ENCODE measurements at regions of chr9 and their contacts with region 1.

Region 1: DNA sequence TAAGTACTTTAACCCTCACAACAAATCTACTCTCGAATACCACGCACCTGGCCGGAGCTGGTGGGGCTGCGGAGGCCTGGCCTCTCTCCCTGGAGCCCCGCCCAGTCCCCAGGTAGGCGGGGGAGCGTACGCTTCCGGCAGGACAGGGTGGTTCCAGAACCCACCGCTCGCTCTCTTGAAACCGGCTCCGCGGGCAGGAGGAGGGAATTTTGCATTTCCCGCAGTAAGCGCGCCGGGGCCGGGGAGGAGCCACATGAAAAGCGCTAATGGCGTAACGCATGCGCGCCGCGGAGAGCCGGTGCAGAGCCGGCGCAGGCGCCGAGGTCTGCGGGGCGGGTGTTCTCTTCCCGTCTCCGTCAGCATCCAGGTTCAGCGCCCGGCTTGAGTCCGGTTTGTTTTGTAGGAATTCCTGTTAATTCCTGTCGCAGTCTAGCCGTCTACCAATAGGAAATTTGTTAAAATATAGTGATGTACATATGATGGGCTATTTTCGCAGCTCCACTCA is 20.8 kb downstream of the CAVIN4 start:
- DNase-seq: peak; percentile 83
- H3K4me3 Mint-ChIP-seq: peak overlapping the region; percentile 72
- H3K27ac Mint-ChIP-seq: peak overlapping the region; percentile 58
- H3K4me1 Mint-ChIP-seq: peaks cover 15% of the 10 kb centered on the region
- H3K27me3 Mint-ChIP-seq: no peaks in the 10 kb centered on the region

Region 2: GRCh38 chr9:99221621-99222415 is 1376.9 kb before region 1 on chr9 and contains the starts of genes ALG2 and SEC61B:
- CTCF ChIA-PET with region 1: no interaction called
- intact Hi-C with region 1: loop called (anchors 5 kb)
- DNase-seq: peak; percentile 94
- H3K4me3 Mint-ChIP-seq: peak within 1 kb of the TSS; percentile 97
- H3K27ac Mint-ChIP-seq: peak within 1 kb of the TSS; percentile 98
- H3K4me1 Mint-ChIP-seq: peaks cover 56% of the 10 kb centered on the region
- H3K27me3 Mint-ChIP-seq: no peaks in the 10 kb centered on the region
- total RNA-seq, gene ALG2: 11.3 to 11.8 TPM
- total RNA-seq, gene SEC61B: 105 TPM

Region 3: GRCh38 chr9:100098887-100099721 is 499.6 kb before region 1 on chr9 and contains the starts of genes ERP44 and INVS:
- CTCF ChIA-PET with region 1: no interaction called
- intact Hi-C with region 1: loop called (anchors 1 kb)
- DNase-seq: peak; percentile 99
- H3K4me3 Mint-ChIP-seq: peak within 1 kb of the TSS; percentile 97
- H3K27ac Mint-ChIP-seq: peak within 1 kb of the TSS; percentile 79
- H3K4me1 Mint-ChIP-seq: peaks cover 29% of the 10 kb centered on the region
- H3K27me3 Mint-ChIP-seq: no peaks in the 10 kb centered on the region
- total RNA-seq, gene ERP44: 9.1 to 9.5 TPM
- total RNA-seq, gene INVS: 5.7 to 7.3 TPM

Region 4: GRCh38 chr9:100277166-100277979 is 321.3 kb before region 1 on chr9:
- CTCF ChIA-PET with region 1: no interaction called
- intact Hi-C with region 1: no loop called
- DNase-seq: no peak
- H3K4me3 Mint-ChIP-seq: no peak overlapping the region
- H3K27ac Mint-ChIP-seq: no peak overlapping the region
- H3K4me1 Mint-ChIP-seq: no peaks in the 10 kb centered on the region
- H3K27me3 Mint-ChIP-seq: no peaks in the 10 kb centered on the region

Region 5: DNA sequence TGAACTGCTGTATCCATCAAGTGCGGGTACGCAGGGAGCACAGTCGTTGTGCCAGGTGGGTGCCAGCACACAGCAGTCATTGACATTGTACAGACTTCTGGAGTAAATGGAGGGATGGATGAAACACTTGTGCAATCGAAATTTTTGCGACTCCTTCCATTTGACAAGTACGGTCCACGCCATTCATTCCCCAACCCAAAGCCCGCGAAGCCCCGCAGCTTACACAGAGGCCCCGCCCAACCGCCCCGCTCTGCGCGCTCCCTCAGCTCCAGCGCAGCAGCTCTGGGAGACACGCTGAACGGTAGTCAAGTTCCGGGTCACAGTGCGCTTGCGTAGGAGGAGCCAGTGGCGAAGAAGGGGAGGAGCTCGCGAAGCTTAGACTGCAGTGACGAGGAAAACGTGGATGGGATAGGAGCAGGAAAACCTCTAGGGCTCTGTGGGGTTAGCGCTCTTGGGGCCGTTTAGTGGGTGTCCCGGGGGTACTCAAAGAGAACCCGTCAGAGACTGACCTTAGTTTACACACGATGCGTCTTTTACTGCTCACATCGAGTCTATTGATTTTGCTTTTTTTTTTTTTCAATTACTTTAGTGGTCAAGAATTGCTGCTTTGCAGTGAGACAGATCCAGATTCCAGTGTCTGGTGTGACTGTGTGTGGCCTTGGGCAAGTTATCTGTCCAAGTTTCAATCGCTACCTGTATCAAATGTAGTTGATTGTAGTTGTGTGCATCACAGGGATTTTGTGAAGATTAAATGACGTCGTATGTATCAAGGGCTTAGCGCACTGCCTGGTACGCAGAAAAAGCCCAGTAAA is 187.0 kb before region 1 on chr9:
- CTCF ChIA-PET with region 1: interaction called, 5 read pairs
- intact Hi-C with region 1: loop called (anchors 5 kb)
- DNase-seq: peak; percentile 93
- H3K4me3 Mint-ChIP-seq: peak overlapping the region; percentile 82
- H3K27ac Mint-ChIP-seq: peak overlapping the region; percentile 32
- H3K4me1 Mint-ChIP-seq: peaks cover 13% of the 10 kb centered on the region
- H3K27me3 Mint-ChIP-seq: peaks cover 17% of the 10 kb centered on the region

Region 6: DNA sequence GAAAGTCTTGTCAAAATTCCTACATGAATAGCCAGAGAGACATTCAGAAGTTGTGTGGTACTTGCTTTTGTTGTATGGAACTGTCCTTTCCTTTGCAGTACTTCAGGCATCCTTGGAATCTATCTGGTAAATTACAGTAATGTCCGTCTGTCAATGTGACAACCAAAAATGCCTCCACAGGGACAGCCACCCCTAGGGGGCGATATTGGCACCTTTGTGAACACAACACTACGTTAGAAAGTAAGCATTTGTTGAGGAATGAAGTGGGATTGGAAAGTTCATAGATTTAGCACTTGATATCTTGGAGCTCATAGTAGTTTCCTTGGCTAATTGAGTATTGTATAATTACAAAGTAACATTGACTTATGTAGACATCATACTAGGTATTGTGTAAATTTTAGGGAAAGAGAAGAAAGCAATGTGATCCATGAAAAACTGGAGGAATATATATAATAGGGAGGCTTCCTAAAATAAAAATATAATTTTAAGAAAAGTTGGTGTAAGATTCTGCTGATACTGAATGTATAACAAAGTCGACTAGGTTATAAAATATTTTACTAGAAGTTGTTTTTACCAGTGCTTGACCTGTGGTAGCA is 93.0 kb before region 1 on chr9:
- CTCF ChIA-PET with region 1: no interaction called
- intact Hi-C with region 1: loop called (anchors 1 kb)
- DNase-seq: peak; percentile 82
- H3K4me3 Mint-ChIP-seq: no peak overlapping the region
- H3K27ac Mint-ChIP-seq: no peak overlapping the region
- H3K4me1 Mint-ChIP-seq: no peaks in the 10 kb centered on the region
- H3K27me3 Mint-ChIP-seq: peaks cover 2% of the 10 kb centered on the region

Region 7: DNA sequence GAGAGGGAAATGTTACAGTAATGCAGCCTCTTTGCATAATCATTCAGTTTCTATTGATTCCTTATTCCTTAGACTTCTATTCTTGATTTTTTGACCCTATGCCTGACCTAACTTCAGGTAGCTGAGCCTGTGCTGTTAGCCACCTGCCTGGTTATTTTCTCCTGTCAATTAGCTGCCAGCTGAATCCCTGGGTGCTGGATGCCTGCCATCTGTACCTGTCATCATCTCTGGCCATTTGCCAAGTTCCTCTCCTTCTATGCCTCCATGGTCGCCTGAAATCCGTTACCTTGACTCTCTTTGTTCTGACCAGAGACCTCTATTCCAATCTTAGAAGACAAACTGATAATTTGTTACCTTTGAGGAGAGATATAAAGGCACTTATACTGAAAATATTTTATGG is 157.5 kb after region 1 on chr9:
- CTCF ChIA-PET with region 1: no interaction called
- intact Hi-C with region 1: no loop called
- DNase-seq: no peak
- H3K4me3 Mint-ChIP-seq: no peak overlapping the region
- H3K27ac Mint-ChIP-seq: no peak overlapping the region
- H3K4me1 Mint-ChIP-seq: no peaks in the 10 kb centered on the region
- H3K27me3 Mint-ChIP-seq: peaks cover 3% of the 10 kb centered on the region

Region 8: DNA sequence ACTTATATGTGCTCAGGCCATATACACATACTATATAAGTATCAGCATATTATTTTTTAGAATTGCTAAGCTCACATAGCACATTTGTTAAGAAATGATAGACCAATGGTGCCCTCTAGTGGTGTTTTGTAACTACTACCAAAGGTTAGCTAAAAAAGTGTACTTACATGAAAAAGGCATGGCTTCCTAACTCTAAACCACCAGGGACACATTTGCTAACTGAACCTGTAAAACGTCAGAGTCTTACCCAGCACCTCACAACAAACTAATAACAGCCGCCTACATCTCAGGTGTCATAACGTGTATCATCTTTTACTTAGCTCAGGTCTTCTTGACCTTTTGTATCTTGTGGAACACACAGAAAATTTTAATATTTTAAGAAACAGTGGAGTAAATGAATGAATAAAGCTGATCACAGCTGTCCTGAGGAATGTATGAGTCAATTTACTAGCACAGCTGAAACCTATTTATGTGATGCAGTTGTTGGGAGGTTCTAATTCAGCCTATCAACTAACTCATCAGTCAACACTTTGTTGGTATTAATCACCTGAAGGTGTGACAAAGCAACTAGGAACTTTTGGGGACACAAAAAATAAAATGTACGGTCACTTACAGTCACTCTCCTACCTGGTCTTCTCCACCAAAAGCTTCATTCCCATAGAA is 713.2 kb after region 1 on chr9:
- CTCF ChIA-PET with region 1: interaction called, 42 read pairs
- intact Hi-C with region 1: loop called (anchors 1 kb)
- DNase-seq: no peak
- H3K4me3 Mint-ChIP-seq: no peak overlapping the region
- H3K27ac Mint-ChIP-seq: no peak overlapping the region
- H3K4me1 Mint-ChIP-seq: no peaks in the 10 kb centered on the region
- H3K27me3 Mint-ChIP-seq: peaks cover 6% of the 10 kb centered on the region